GM13976 (cell line): ENCODE measurements at regions of chr2 and their contacts with region 1.

Region 1: GRCh38 chr2:131322209-131322608 is 41.8 kb downstream of the RAB6D start:
- DNase-seq: no peak
- CTCF ChIP-seq: no peak

Region 2: DNA sequence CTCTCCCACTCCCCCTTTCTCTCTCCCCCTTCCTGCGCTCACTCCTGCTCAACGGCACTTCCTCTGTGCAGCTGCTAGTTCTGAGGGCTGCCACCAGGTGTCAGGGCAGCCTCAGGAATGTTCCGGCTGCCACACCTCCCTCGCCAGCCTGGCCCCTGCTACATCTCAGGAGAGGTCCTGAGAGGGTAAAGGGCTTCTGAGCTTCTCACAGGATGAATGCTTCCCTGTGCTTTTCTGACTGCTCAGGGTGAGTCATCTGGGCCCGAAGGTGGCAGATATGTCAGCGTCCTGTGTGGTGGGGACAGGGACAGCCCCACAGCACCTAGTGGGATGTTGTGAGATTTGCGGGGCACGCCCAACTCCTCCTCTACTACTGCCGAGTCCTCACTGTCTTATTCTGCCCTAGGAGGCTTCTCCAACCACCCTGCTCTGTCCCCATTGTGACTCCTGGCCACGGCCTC is 168.1 kb before region 1 on chr2:
- in situ Hi-C with region 1: loop called (anchors 25 kb)
- DNase-seq: peak; percentile 89
- CTCF ChIP-seq: peak; percentile 97